ENCODE measurements at regions of chr10 and their contacts with region 1.

Region 1: GRCh38 chr10:110387983-110388687 is 83.4 kb upstream of the SMNDC1 start:
- DNase-seq: peak; percentile 83
- ATAC-seq: peak; percentile 87
- H3K4me3 ChIP-seq: no peak overlapping the region
- H3K27ac ChIP-seq: peak overlapping the region; percentile 75
- H3K4me1 ChIP-seq: peaks cover 26% of the 10 kb centered on the region
- H3K27me3 ChIP-seq: no peaks in the 10 kb centered on the region
- CTCF ChIP-seq: no peak
- EP300 ChIP-seq: peak in 1 of 2 experiments; percentile 96; a peak in 3 of 4 replicates
- POLR2A ChIP-seq: no peak
- RAD21 ChIP-seq: peak; percentile 22; the same call in 1 of the 2 replicates

Region 2: DNA sequence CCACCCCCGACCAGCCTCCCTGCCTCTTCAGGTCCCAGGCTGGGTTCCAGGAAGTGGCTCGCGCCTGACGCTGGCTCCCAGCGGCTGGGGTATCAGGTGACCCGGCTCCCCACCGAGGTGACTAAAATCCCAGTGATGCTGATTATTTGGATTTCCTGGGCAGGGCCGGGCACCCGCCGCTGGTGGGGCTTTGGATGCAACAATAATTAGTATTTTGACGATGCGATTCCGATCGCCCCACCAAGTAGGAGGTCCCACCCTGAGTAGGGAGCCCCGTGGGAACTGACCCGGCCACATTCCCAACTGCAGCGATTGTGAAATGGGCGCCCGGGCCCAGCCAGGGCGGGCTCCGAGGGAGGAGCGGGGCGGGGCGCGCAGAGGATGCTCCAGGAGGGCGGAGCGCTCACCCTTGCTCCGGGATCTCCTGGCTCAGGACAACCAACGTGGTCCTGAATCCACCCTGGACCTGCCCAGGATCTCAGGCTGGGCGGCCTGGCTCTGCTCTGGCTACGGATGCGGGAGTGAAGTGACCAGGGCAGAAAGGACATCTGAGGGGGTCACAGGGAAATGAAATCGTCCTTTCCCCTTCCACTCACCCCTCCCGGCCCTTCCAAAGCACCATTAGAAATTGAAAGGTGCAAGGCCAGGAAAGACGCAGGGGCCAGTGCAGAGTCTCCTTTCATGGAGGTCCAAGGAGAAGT is 142.1 kb after region 1 on chr10:
- CTCF ChIA-PET with region 1: no interaction called
- POLR2A ChIA-PET with region 1: no interaction called
- RAD21 ChIA-PET with region 1: interaction called, 3 read pairs
- SMC1A ChIA-PET with region 1: interaction called, 3 read pairs
- in situ Hi-C with region 1: no loop called
- intact Hi-C with region 1: loop called (anchors 1 kb)
- DNase-seq: no peak
- ATAC-seq: peak; percentile 35
- H3K4me3 ChIP-seq: peak overlapping the region; percentile 30; the same call in 1 of the 2 replicates
- H3K27ac ChIP-seq: 0 out of 2 replicates have a peak overlapping the region, but pooled peaks have one; percentile 18
- H3K4me1 ChIP-seq: peaks cover 36% of the 10 kb centered on the region
- H3K27me3 ChIP-seq: no peaks in the 10 kb centered on the region
- CTCF ChIP-seq: no peak
- EP300 ChIP-seq: no peak
- POLR2A ChIP-seq: no peak
- RAD21 ChIP-seq: no peak

Region 3: GRCh38 chr10:110556969-110557601 is 168.9 kb after region 1 on chr10:
- CTCF ChIA-PET with region 1: no interaction called
- POLR2A ChIA-PET with region 1: no interaction called
- RAD21 ChIA-PET with region 1: no interaction called
- SMC1A ChIA-PET with region 1: no interaction called
- in situ Hi-C with region 1: no loop called
- intact Hi-C with region 1: no loop called
- DNase-seq: no peak
- ATAC-seq: peak; percentile 99
- H3K4me3 ChIP-seq: no peak overlapping the region
- H3K27ac ChIP-seq: no peak overlapping the region
- H3K4me1 ChIP-seq: no peaks in the 10 kb centered on the region
- H3K27me3 ChIP-seq: no peaks in the 10 kb centered on the region
- CTCF ChIP-seq: peak; percentile 77 to 87 (median 83)
- EP300 ChIP-seq: no peak
- POLR2A ChIP-seq: no peak
- RAD21 ChIP-seq: peak; percentile 58

Region 4: GRCh38 chr10:110883924-110884323 is 495.8 kb after region 1 on chr10:
- CTCF ChIA-PET with region 1: no interaction called
- POLR2A ChIA-PET with region 1: no interaction called
- RAD21 ChIA-PET with region 1: no interaction called
- SMC1A ChIA-PET with region 1: no interaction called
- in situ Hi-C with region 1: no loop called
- intact Hi-C with region 1: no loop called
- DNase-seq: no peak
- ATAC-seq: peak; percentile 5; the same call in 2 of the 3 replicates
- H3K4me3 ChIP-seq: no peak overlapping the region; the same call in 1 of the 2 replicates
- H3K27ac ChIP-seq: no peak overlapping the region
- H3K4me1 ChIP-seq: peaks cover 6% of the 10 kb centered on the region
- H3K27me3 ChIP-seq: no peaks in the 10 kb centered on the region
- CTCF ChIP-seq: no peak
- EP300 ChIP-seq: no peak
- POLR2A ChIP-seq: no peak
- RAD21 ChIP-seq: no peak

Measured in GM12878 (cell line).